ENCODE measurements at regions of chr15 and their contacts with region 1.

Region 1: DNA sequence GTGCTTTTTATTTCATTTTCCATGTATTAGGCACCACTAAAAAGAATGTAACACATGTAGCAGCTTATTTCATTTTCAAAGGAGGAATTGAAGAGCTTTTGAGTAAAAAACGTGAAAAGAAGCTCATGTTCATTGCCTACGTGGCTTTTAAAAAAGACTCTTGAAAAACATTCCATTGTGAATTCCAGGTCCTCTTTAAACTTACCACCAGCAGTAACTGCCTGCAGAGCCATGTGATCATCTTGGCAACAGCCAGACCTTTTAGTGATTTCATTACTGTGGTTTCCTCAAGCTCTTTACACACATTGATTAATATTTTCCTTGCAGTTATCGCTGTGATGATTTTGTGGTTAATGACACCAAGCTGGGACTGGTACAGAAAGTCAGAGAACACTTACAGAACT is 43.8 kb upstream of the FBXL22 start:
- DNase-seq: no peak
- ATAC-seq: peak in 1 of 2 experiments; percentile 36; a peak in 2 of 6 replicates
- H3K4me3 ChIP-seq: no peak overlapping the region
- H3K27ac ChIP-seq: no peak overlapping the region
- H3K4me1 ChIP-seq: peaks cover 34% of the 10 kb centered on the region
- CTCF ChIP-seq: no peak
- EP300 ChIP-seq: no peak
- POLR2A ChIP-seq: no peak
- RAD21 ChIP-seq: no peak

Region 2: DNA sequence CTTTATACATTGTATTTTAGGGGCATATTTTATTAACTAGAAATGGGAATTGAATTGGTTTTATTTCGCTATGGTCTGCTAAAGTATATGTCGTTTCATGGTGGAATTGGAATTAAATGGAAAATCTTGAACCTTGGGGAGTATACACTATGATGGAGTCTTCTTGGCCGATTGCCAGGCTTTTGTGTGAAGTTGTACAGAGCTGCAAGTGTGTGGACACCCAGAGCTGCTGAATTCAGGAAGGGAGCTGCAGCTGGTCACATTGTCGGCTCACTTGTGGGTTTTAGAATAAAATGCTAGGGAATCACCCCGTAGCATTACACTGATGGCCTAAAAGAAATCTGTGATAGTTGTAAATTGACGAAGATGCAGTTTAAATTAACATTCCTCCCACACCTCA is 13.9 kb before region 1 on chr15:
- CTCF ChIA-PET with region 1: interaction called, 10 read pairs
- POLR2A ChIA-PET with region 1: interaction called, 7 read pairs
- DNase-seq: no peak
- ATAC-seq: peak in 1 of 2 experiments; percentile 25; a peak in 1 of 6 replicates
- H3K4me3 ChIP-seq: no peak overlapping the region
- H3K27ac ChIP-seq: no peak overlapping the region
- H3K4me1 ChIP-seq: peaks cover 48% of the 10 kb centered on the region
- CTCF ChIP-seq: no peak
- EP300 ChIP-seq: no peak
- POLR2A ChIP-seq: no peak
- RAD21 ChIP-seq: no peak

Measured in A549 (cell line).